ENCODE measurements at regions of chr4 and their contacts with region 1.

Region 1: DNA sequence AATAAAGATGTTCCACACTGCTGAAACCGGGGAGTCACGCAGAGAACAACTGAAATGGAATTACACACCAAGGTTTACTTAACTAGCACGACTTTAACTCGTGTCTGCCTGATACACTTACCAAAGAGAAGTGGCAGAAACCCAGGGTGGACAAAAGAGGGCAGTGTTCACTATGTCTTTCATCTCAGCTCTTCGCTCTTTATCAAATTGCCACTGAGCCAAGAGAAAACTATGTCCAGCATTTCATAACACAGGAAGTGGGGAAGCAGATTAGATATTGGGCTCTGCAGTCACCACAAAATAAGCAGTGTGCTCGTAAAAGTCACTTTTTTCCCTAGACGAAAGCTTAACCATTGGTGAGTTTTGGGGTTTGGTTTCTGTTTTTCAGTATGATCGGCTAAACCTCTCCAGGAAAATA is 155.7 kb downstream of the CHIC2 start:
- DNase-seq: peak; percentile 60 to 76
- H3K4me3 ChIP-seq: peak overlapping the region; percentile 8; the same call in 1 of the 2 replicates
- H3K4me3 Mint-ChIP-seq: peak overlapping the region; percentile 68
- H3K27ac Mint-ChIP-seq: peak overlapping the region; percentile 57
- H3K4me1 ChIP-seq: peaks cover 44% of the 10 kb centered on the region
- H3K4me1 Mint-ChIP-seq: peaks cover 21% of the 10 kb centered on the region
- H3K27me3 ChIP-seq: no peaks in the 10 kb centered on the region
- H3K27me3 Mint-ChIP-seq: no peaks in the 10 kb centered on the region
- CTCF ChIP-seq: peak; percentile 57 to 72

Region 2: GRCh38 chr4:53196882-53197771 is 711.5 kb before region 1 on chr4:
- CTCF ChIA-PET with region 1: no interaction called
- POLR2A ChIA-PET with region 1: no interaction called
- intact Hi-C with region 1: loop called (anchors 5 kb)
- DNase-seq: peak in 1 of 2 experiments; percentile 59
- H3K4me3 ChIP-seq: no peak overlapping the region
- H3K4me3 Mint-ChIP-seq: no peak overlapping the region
- H3K27ac Mint-ChIP-seq: no peak overlapping the region
- H3K4me1 ChIP-seq: no peaks in the 10 kb centered on the region
- H3K4me1 Mint-ChIP-seq: peaks cover 3% of the 10 kb centered on the region
- H3K27me3 ChIP-seq: no peaks in the 10 kb centered on the region
- H3K27me3 Mint-ChIP-seq: no peaks in the 10 kb centered on the region
- CTCF ChIP-seq: peak; percentile 61 to 66

Region 3: DNA sequence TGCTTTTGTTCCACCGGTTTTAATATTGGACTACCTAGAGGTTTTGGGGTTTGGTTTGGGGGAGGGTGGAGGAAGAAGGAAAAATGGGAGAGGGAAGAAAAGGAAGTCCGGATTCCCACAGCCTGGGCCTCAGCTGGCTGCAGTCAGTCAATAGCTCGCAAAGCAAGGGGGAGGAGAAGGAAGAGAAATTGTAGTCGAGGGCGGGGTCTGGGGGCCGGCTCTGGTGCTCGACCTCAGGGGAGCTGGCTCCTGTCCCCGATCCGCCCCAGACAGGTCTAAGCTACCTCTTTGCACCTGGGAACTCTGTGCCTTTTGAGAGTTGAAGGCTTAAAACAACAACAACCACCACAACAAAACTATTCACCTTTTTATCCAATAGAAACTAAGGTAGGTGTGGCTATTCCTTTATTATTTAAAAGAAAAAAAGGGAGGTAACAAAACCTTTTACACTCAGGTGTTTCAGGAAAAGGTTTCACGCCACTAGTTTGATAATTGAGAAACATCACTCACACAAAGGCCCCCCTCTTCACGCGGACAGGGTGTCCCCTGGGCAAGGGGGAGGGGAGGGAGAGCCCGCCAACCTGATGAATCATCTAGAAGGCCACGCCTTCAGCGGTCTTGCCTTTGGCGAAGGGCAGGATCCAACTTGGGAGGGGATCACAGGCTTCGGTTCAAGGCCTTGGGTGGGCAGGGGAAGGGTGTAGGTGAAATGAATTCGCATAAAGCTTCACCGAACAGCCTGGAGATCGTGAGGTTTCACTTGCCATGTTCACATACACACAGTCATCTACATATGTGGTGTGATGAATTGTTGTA is 315.8 kb before region 1 on chr4:
- CTCF ChIA-PET with region 1: no interaction called
- POLR2A ChIA-PET with region 1: no interaction called
- intact Hi-C with region 1: loop called (anchors 10 kb)
- DNase-seq: peak; percentile 73 to 82
- H3K4me3 ChIP-seq: peak overlapping the region; percentile 35
- H3K4me3 Mint-ChIP-seq: peak overlapping the region; percentile 82
- H3K27ac Mint-ChIP-seq: peak overlapping the region; percentile 87
- H3K4me1 ChIP-seq: peaks cover 33% of the 10 kb centered on the region
- H3K4me1 Mint-ChIP-seq: peaks cover 32% of the 10 kb centered on the region
- H3K27me3 ChIP-seq: no peaks in the 10 kb centered on the region
- H3K27me3 Mint-ChIP-seq: no peaks in the 10 kb centered on the region
- CTCF ChIP-seq: no peak

Region 4: GRCh38 chr4:53777244-53777984 is 131.3 kb before region 1 on chr4:
- CTCF ChIA-PET with region 1: no interaction called
- POLR2A ChIA-PET with region 1: no interaction called
- intact Hi-C with region 1: loop called (anchors 5 kb)
- DNase-seq: no peak
- H3K4me3 ChIP-seq: no peak overlapping the region
- H3K4me3 Mint-ChIP-seq: peak overlapping the region; percentile 50
- H3K27ac Mint-ChIP-seq: no peak overlapping the region
- H3K4me1 ChIP-seq: peaks cover 48% of the 10 kb centered on the region
- H3K4me1 Mint-ChIP-seq: peaks cover 27% of the 10 kb centered on the region
- H3K27me3 ChIP-seq: no peaks in the 10 kb centered on the region
- H3K27me3 Mint-ChIP-seq: no peaks in the 10 kb centered on the region
- CTCF ChIP-seq: no peak

Region 5: DNA sequence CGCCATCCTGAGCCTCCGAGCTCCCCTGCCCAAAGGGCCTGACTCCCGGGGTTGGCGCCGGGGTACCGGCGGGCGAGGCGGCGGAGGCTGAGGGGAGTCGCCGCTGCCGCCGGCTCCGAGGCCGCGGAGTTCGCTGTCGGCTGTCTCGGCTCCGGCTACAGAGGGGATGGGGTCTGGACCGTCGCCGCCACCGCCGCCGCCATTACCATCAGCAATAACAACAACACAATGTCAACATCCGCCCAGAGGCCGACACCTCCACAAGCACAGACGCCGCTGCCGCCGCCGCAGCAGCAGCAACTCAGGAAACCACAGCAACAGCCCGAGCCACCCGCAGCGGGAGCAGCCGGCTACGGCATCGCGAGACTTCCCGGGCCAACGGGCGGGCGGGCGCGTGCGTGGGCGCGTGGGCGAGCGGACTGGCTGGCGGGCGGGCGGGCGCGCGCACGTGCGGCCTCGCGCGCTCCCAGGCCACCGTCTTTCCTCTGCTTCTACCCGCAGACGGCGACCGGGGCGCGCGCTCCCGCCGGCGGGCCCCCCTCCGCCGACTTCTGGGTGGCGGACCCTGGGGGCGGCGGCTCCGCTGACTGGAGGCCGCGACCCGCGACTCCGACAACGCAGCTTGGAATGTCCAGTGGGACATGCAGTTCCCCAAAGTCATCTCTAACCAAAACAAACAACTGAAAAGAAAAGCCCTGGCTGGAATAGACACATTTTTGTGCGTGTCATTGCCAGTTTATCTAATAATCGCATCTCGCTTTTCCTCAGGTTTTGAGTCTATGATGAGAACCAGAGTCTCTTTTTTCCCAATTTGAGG is 155.8 kb after region 1 on chr4 and contains the start of gene CHIC2:
- CTCF ChIA-PET with region 1: no interaction called
- POLR2A ChIA-PET with region 1: no interaction called
- intact Hi-C with region 1: loop called (anchors 5 kb)
- DNase-seq: peak; percentile 94 to 96
- H3K4me3 ChIP-seq: peak within 1 kb of the TSS; percentile 92
- H3K4me3 Mint-ChIP-seq: peak within 1 kb of the TSS; percentile 89
- H3K27ac Mint-ChIP-seq: peak within 1 kb of the TSS; percentile 20
- H3K4me1 ChIP-seq: peaks cover 25% of the 10 kb centered on the region
- H3K4me1 Mint-ChIP-seq: peaks cover 40% of the 10 kb centered on the region
- H3K27me3 ChIP-seq: no peaks in the 10 kb centered on the region
- H3K27me3 Mint-ChIP-seq: no peaks in the 10 kb centered on the region
- CTCF ChIP-seq: no peak
- total RNA-seq, gene CHIC2: 24.9 and 30.0 TPM in 2 replicates

Region 6: GRCh38 chr4:54217642-54218495 is 309.2 kb after region 1 on chr4:
- CTCF ChIA-PET with region 1: interaction called, 10 read pairs
- POLR2A ChIA-PET with region 1: no interaction called
- intact Hi-C with region 1: loop called (anchors 1 kb)
- DNase-seq: peak; percentile 86 to 88
- H3K4me3 ChIP-seq: peak overlapping the region; percentile 38
- H3K4me3 Mint-ChIP-seq: peak overlapping the region; percentile 78
- H3K27ac Mint-ChIP-seq: peak overlapping the region; percentile 85
- H3K4me1 ChIP-seq: peaks cover 53% of the 10 kb centered on the region
- H3K4me1 Mint-ChIP-seq: peaks cover 23% of the 10 kb centered on the region
- H3K27me3 ChIP-seq: no peaks in the 10 kb centered on the region
- H3K27me3 Mint-ChIP-seq: no peaks in the 10 kb centered on the region
- CTCF ChIP-seq: peak; percentile 76 to 78

Region 7: GRCh38 chr4:54233277-54233696 is 324.6 kb after region 1 on chr4:
- CTCF ChIA-PET with region 1: interaction called, 21 read pairs
- POLR2A ChIA-PET with region 1: no interaction called
- intact Hi-C with region 1: loop called (anchors 1 kb)
- DNase-seq: peak; percentile 80 to 87
- H3K4me3 ChIP-seq: peak overlapping the region; percentile 75
- H3K4me3 Mint-ChIP-seq: peak overlapping the region; percentile 87
- H3K27ac Mint-ChIP-seq: no peak overlapping the region
- H3K4me1 ChIP-seq: peaks cover 6% of the 10 kb centered on the region
- H3K4me1 Mint-ChIP-seq: peaks cover 9% of the 10 kb centered on the region
- H3K27me3 ChIP-seq: no peaks in the 10 kb centered on the region
- H3K27me3 Mint-ChIP-seq: no peaks in the 10 kb centered on the region
- CTCF ChIP-seq: peak in 1 of 2 experiments; percentile 77